Right ventricle myocardium superior (tissue), 1 donor: ENCODE measurements at regions of chr20 and their contacts with region 1.

Region 1: GRCh38 chr20:10673988-10674711 is at the start of gene JAG1:
- DNase-seq: peak; percentile 98
- ATAC-seq: peak; percentile 88
- total RNA-seq, gene JAG1: 22.1 TPM

Region 2: GRCh38 chr20:10802236-10802635 is 128.1 kb after region 1 on chr20:
- intact Hi-C with region 1: loop called (anchors 10 kb)
- DNase-seq: no peak
- ATAC-seq: no peak

Region 3: GRCh38 chr20:10857352-10858070 is 183.4 kb after region 1 on chr20:
- intact Hi-C with region 1: no loop called
- DNase-seq: peak; percentile 38
- ATAC-seq: peak; percentile 66

Region 4: DNA sequence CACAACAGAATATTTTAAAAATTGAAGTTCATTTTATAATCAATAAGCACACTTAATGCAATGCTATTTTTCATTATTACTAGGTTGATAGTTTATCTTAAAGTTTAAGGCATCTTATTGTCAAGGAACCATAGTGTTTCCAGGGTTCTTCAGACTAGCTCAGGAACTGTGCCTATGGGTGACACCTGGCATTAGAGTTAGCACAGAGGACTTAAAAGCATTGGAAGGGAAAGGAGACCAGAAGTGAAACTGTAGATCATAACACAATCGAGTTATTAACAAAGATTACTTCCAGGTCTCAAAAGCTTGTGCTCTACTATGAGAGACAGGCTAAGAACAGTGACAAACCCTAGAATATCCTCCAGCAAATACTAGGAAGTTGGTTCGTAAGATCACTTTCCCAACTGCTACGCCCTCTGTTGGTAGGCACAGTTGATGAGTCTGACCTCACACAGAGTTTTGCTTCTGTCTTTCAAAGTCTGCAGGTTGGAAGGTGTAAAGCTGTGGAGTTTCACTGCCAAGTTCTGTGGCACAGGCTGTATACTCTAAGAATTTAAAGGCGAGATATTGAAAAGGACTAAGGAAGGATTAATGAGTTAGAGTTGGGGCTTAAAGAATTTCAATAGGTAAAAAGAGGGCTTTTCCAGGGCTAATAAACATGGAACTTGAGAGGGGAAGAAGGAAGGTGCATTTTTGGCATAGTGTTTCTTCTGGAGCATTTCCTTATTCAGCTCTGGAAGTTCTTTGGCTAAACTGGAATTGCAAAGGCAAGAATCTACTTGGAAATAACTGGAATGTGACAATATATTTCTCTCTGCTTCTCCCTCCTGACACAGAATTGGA is 531.0 kb after region 1 on chr20:
- intact Hi-C with region 1: loop called (anchors 5 kb)
- DNase-seq: peak; percentile 45
- ATAC-seq: peak; percentile 97

Region 5: GRCh38 chr20:11274141-11274594 is 600.0 kb after region 1 on chr20:
- intact Hi-C with region 1: loop called (anchors 10 kb)
- DNase-seq: no peak
- ATAC-seq: peak; percentile 95

Region 6: DNA sequence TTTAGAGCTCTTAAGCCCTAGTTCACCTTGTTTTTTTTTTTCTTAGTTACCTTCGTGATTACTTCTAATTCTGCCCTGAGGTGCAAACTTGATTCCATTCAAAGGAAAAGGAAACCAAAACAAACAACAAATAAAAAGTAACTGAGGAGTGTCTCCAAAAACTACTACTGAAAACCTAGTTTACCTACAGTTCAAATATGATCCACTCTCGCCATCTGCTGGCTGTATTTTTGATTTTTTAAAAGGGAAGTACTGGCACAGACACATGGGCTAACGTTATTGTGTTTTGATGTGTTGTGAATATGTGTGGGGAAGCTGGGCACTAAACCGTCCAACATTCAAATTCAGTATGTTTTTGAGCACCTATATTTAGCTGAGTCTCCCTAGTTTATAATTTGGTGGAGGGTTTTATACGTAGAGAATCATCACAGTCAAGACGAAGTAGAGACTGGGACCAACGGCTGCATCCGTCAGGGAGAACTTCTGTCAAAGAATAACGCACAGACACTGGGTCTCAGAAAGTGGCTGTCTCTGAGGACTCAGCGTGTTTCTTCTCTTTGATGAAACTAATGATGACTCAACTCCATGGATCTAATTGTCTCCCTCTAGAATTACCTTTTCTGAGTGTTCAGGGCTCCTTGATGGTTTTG is 870.0 kb after region 1 on chr20:
- intact Hi-C with region 1: loop called (anchors 5 kb)
- DNase-seq: no peak
- ATAC-seq: peak; percentile 62